ENCODE measurements at regions of chr17 and their contacts with region 1.

Region 1: GRCh38 chr17:17849845-17850373 is 13.1 kb upstream of the SREBF1 start:
- DNase-seq: peak; percentile 56 to 85 (median 85)
- H3K4me3 ChIP-seq: peak overlapping the region in 1 of 7 experiments; percentile 33
- H3K27ac ChIP-seq: peak overlapping the region in 1 of 2 experiments; percentile 51
- H3K4me1 ChIP-seq: peaks cover 0 to 56% (median 46%) of the 10 kb centered on the region in 4 experiments
- H3K27me3 ChIP-seq: no peaks in the 10 kb centered on the region

Region 2: DNA sequence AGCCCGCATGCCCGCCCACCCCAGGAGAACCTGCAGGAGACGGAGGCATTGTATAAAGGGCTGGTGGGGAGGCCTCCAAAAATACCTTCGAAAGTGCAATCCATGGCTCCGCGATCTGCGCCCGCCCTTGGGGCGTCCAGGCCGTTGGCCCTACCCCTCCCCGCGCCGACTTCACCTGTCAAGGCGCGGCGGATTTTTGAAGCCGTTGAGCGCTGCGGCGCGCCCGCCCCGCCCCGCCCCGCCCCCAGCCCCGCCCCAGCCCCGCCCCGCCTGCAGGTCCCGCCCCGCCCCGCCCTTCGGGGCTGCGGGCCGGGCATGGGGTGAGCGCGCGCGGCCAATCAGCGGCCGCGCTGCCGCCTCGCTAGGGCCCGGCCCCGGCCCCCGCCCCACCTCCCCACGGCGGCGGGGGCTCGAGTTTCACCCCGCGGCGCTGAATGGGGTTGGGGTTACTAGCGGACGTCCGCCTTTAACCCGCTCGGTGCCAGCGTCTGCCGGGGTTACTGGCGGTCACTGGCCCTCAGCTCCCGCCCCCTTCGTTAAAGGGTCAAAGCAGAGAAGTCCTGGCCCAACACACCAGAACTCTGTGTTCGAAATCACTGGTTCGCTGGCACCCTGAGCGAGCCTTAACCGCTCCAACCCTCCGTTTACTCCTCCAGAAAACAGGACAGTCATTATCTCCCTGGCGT is 26.3 kb before region 1 on chr17:
- CTCF ChIA-PET with region 1: interaction called, 295 read pairs
- POLR2A ChIA-PET with region 1: no interaction called
- DNase-seq: peak; percentile 72 to 86 (median 84)
- H3K4me3 ChIP-seq: peak overlapping the region; percentile 31 to 77 (median 69)
- H3K27ac ChIP-seq: peak overlapping the region in 1 of 2 experiments; percentile 76
- H3K4me1 ChIP-seq: peaks cover 6 to 89% (median 53%) of the 10 kb centered on the region in 4 experiments
- H3K27me3 ChIP-seq: no peaks in the 10 kb centered on the region

Region 3: GRCh38 chr17:17836250-17836817 is 13.6 kb before region 1 on chr17:
- CTCF ChIA-PET with region 1: interaction called, 14 read pairs
- POLR2A ChIA-PET with region 1: interaction called, 17 read pairs
- DNase-seq: peak; percentile 90 to 96 (median 92)
- H3K4me3 ChIP-seq: peak overlapping the region; percentile 62 to 91 (median 85)
- H3K27ac ChIP-seq: peak overlapping the region; percentile 58 to 76
- H3K4me1 ChIP-seq: peaks cover 18 to 73% (median 69%) of the 10 kb centered on the region in 4 experiments
- H3K27me3 ChIP-seq: no peaks in the 10 kb centered on the region

Region 4: DNA sequence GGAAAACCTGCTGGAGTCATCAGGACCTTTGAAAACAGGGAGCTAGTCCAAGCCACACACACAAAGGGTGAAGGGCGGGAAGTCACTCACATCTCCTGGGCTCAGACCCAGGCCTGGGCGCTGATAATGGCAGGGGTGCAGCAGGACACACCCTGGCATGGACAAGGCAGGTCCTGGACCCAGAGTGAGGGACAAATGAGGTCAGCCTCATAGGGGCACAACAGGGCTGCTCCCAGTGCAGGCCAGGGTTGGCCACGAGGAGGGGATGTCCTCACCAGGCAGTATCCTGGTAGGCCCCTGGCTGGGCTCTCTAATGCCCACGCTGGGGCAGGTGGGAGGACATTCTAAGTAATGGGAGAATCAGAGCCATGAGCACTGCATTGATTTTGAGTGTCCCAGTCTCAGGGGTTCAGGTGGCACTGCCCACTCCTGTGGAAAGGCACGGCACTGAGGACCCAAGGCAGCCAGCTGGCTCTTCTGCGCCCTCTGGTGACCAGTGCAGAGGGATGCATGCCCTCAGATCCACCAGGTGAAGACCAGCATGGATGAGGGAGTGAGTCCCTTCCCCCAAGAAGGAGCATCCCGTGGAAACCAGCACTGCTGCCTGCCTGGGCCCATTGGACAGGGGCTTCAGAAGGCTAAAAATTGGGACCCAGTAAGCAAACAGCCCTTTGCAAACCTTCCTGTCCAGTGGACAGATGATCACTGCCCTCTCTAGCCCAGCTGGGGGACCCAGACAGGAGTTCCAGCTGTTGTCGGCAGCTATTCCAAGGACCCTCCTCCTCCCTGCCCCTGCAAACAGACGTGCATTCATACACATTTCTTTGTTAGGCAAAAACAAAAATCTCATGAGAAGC is 10.2 kb after region 1 on chr17:
- CTCF ChIA-PET with region 1: interaction called, 18 read pairs
- POLR2A ChIA-PET with region 1: no interaction called
- DNase-seq: peak; percentile 49 to 66 (median 61)
- H3K4me3 ChIP-seq: no peak overlapping the region
- H3K27ac ChIP-seq: no peak overlapping the region
- H3K4me1 ChIP-seq: peaks cover 0 to 3% (median under 1%) of the 10 kb centered on the region in 4 experiments
- H3K27me3 ChIP-seq: no peaks in the 10 kb centered on the region

Region 5: DNA sequence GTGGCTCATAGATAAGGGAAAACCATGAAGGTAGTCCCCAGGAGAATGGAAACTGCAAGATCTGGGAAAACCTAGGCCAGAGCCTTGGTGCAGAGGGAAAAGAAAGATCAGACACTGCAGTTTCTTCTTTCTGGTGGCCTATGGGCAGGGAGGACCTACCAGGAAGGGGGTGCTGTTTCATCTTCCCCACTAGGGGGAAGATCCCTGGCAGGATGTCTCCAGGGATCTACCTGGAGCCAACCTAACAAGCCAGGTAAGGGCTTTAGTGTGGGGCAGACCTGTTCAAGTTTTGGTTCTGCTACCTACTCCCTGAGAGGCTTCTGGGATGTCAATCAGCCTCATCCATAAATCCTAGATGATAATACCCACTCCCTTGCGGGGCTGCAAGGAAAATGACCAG is 100.9 kb after region 1 on chr17:
- CTCF ChIA-PET with region 1: no interaction called
- POLR2A ChIA-PET with region 1: no interaction called
- DNase-seq: no peak
- H3K4me3 ChIP-seq: no peak overlapping the region
- H3K27ac ChIP-seq: no peak overlapping the region
- H3K4me1 ChIP-seq: no peaks in the 10 kb centered on the region
- H3K27me3 ChIP-seq: no peaks in the 10 kb centered on the region